ENCODE measurements at regions of chr10 and their contacts with region 1.

Region 1: GRCh38 chr10:96651998-96652431 is 65.2 kb upstream of the TM9SF3 start:
- DNase-seq: peak; percentile 86
- ATAC-seq: peak; percentile 82
- H3K4me3 ChIP-seq: peak overlapping the region in 1 of 5 experiments; percentile 24
- H3K4me3 Mint-ChIP-seq: peak overlapping the region; percentile 44
- H3K27ac ChIP-seq: peak overlapping the region; percentile 54 to 72
- H3K27ac Mint-ChIP-seq: peak overlapping the region; percentile 86
- H3K4me1 ChIP-seq: peaks cover 49 to 72% of the 10 kb centered on the region in 2 donors
- H3K4me1 Mint-ChIP-seq: peaks cover 79% of the 10 kb centered on the region
- H3K27me3 ChIP-seq: no peaks in the 10 kb centered on the region
- H3K27me3 Mint-ChIP-seq: no peaks in the 10 kb centered on the region
- CTCF ChIP-seq: no peak

Region 2: DNA sequence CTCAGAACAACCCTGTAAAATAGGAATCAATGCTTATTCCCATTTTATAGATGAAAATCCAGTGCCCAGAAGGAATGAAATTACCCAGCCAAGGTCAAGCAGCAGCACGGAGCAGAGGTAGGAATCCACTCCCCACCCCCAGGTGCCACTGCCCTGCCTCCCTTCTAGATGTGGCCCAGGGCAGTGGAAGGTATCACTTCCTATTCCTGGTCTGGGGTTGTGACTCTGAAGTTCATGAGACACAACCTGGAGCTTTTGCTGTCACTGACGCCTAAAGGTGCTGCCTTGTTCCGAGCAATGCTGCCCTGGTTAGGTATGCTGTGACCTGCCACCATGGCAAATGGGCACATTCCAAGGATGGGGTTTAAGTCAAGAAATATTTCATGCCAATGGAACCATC is 14.7 kb after region 1 on chr10:
- CTCF ChIA-PET with region 1: interaction called, 8 read pairs
- POLR2A ChIA-PET with region 1: interaction called, 4 read pairs
- intact Hi-C with region 1: loop called (anchors 1 kb)
- DNase-seq: peak; percentile 74
- ATAC-seq: peak; percentile 89
- H3K4me3 ChIP-seq: peak overlapping the region in 1 of 5 experiments; percentile 42
- H3K4me3 Mint-ChIP-seq: peak overlapping the region; percentile 39
- H3K27ac ChIP-seq: peak overlapping the region; percentile 43 to 71
- H3K27ac Mint-ChIP-seq: peak overlapping the region; percentile 68
- H3K4me1 ChIP-seq: peaks cover 72 to 79% of the 10 kb centered on the region in 2 donors
- H3K4me1 Mint-ChIP-seq: peaks cover 71% of the 10 kb centered on the region
- H3K27me3 ChIP-seq: no peaks in the 10 kb centered on the region
- H3K27me3 Mint-ChIP-seq: no peaks in the 10 kb centered on the region
- CTCF ChIP-seq: no peak

Region 3: GRCh38 chr10:96673318-96674099 is 21.5 kb after region 1 on chr10:
- CTCF ChIA-PET with region 1: interaction called, 8 read pairs
- POLR2A ChIA-PET with region 1: interaction called, 9 read pairs
- intact Hi-C with region 1: loop called (anchors 1 kb)
- DNase-seq: peak; percentile 90
- ATAC-seq: peak; percentile 82
- H3K4me3 ChIP-seq: peak overlapping the region; percentile 33 to 65 (median 46)
- H3K4me3 Mint-ChIP-seq: peak overlapping the region; percentile 87
- H3K27ac ChIP-seq: peak overlapping the region; percentile 97 to 99
- H3K27ac Mint-ChIP-seq: peak overlapping the region; percentile 98
- H3K4me1 ChIP-seq: peaks cover 93 to 100% of the 10 kb centered on the region in 2 donors
- H3K4me1 Mint-ChIP-seq: peaks cover 84% of the 10 kb centered on the region
- H3K27me3 ChIP-seq: no peaks in the 10 kb centered on the region
- H3K27me3 Mint-ChIP-seq: no peaks in the 10 kb centered on the region
- CTCF ChIP-seq: no peak

Region 4: DNA sequence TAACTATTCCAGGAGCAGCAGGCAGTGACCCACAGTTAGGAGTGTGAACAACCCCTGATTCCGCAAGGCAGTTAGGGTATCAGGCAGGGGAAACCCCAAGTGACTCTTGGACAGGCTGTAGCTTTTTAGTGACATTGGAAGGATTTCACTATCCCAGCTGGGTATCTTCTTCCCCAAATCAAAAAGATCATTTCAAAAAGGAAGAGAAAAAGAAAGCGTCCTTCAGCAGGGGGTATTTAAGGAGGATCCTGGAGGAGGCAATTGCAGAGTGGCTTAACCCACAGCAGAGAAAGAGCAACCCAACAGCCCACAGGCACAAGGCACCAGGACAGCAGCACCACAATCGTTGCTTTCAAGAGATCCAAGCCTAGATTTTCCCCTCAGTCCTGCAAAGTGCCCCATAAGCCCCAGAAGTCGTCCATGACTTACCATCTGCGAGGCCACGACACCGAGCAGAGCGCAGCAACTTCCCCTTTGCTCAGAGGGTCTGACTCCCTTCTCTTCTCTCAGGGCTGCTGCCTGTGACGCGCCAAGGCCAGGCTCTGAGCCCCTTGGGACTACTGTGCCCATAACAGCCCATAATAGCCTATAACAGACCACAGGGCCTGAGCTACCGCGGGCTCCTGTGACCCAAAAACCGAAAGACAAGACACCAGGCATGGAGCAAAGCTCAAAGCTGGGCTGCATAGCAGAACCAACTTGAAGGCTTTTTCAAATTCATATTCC is 48.5 kb after region 1 on chr10:
- CTCF ChIA-PET with region 1: interaction called, 9 read pairs
- POLR2A ChIA-PET with region 1: interaction called, 3 read pairs
- intact Hi-C with region 1: loop called (anchors 1 kb)
- DNase-seq: peak; percentile 95
- ATAC-seq: peak; percentile 94
- H3K4me3 ChIP-seq: peak overlapping the region; percentile 75 to 97 (median 82)
- H3K4me3 Mint-ChIP-seq: peak overlapping the region; percentile 98
- H3K27ac ChIP-seq: peak overlapping the region; percentile 88 to 92
- H3K27ac Mint-ChIP-seq: peak overlapping the region; percentile 96
- H3K4me1 ChIP-seq: peaks cover 76 to 81% of the 10 kb centered on the region in 2 donors
- H3K4me1 Mint-ChIP-seq: peaks cover 77% of the 10 kb centered on the region
- H3K27me3 ChIP-seq: no peaks in the 10 kb centered on the region
- H3K27me3 Mint-ChIP-seq: no peaks in the 10 kb centered on the region
- CTCF ChIP-seq: no peak

Region 5: GRCh38 chr10:97089209-97089870 is 437.3 kb after region 1 on chr10:
- CTCF ChIA-PET with region 1: no interaction called
- POLR2A ChIA-PET with region 1: no interaction called
- intact Hi-C with region 1: no loop called
- DNase-seq: no peak
- ATAC-seq: no peak
- H3K4me3 ChIP-seq: no peak overlapping the region
- H3K4me3 Mint-ChIP-seq: no peak overlapping the region
- H3K27ac ChIP-seq: no peak overlapping the region
- H3K27ac Mint-ChIP-seq: no peak overlapping the region
- H3K4me1 ChIP-seq: no peaks in the 10 kb centered on the region
- H3K4me1 Mint-ChIP-seq: no peaks in the 10 kb centered on the region
- H3K27me3 ChIP-seq: peaks cover 0 to 37% (median 5%) of the 10 kb centered on the region in 4 experiments
- H3K27me3 Mint-ChIP-seq: peaks cover 61% of the 10 kb centered on the region
- CTCF ChIP-seq: no peak

Region 6: DNA sequence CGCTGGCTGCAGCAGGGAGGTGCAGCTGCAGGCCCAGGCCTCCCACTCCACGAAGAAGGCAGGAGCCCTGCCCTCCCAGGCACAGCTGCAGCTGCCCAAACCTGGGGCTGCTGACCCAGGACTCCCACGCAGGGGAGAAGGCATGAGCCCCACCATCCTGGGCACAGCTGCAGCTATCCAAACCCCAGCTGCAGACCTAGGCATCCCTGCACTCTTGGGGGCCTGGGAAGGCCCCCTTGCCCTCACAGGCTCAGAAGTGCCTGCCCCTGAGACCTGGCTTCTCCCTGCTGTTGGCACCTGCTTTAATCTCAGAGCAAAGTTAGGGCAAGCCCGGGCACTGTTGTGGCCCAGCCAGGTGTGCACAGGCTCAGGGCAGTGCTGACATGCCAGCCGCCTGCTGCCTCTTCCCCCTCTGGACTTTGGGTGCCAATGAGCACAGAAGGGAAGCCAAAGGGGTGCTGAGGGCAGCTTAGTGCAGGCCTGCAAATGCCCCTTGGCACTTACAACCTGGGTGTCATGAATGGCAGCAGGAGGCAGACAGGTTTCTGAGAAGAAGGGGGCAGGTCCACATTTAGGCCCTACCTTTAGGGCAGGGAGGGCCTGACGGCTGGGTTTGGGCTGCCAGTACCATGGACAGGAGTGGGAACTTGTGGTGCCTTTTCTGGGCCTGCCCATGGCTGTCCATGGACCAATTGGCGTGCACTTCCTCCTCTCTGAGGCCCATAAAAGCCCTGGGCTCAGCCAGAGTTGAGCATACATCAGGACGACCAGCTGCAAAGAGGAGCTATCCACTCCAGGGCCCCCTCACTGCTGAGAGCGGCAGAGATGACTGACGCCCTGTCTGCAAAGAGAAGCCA is 1347.3 kb after region 1 on chr10:
- CTCF ChIA-PET with region 1: no interaction called
- POLR2A ChIA-PET with region 1: no interaction called
- intact Hi-C with region 1: no loop called
- DNase-seq: no peak
- ATAC-seq: no peak
- H3K4me3 ChIP-seq: no peak overlapping the region
- H3K4me3 Mint-ChIP-seq: no peak overlapping the region
- H3K27ac ChIP-seq: no peak overlapping the region
- H3K27ac Mint-ChIP-seq: no peak overlapping the region
- H3K4me1 ChIP-seq: no peaks in the 10 kb centered on the region
- H3K4me1 Mint-ChIP-seq: no peaks in the 10 kb centered on the region
- H3K27me3 ChIP-seq: peaks cover 0 to 6% (median 0%) of the 10 kb centered on the region in 4 experiments
- H3K27me3 Mint-ChIP-seq: peaks cover 10% of the 10 kb centered on the region
- CTCF ChIP-seq: no peak